ENCODE measurements at regions of chr9 and their contacts with region 1.

Region 1: GRCh38 chr9:116737152-116737546 is 50.0 kb downstream of the TRIM32 start:
- DNase-seq: peak; percentile 47
- H3K4me3 ChIP-seq: no peak overlapping the region
- H3K27ac ChIP-seq: no peak overlapping the region
- H3K27me3 ChIP-seq: peaks cover 2% of the 10 kb centered on the region
- CTCF ChIP-seq: peak; percentile 98

Region 2: GRCh38 chr9:116724123-116724522 is 13.0 kb before region 1 on chr9:
- CTCF ChIA-PET with region 1: interaction called, 69 read pairs
- POLR2A ChIA-PET with region 1: no interaction called
- DNase-seq: no peak
- H3K4me3 ChIP-seq: no peak overlapping the region
- H3K27ac ChIP-seq: no peak overlapping the region
- H3K27me3 ChIP-seq: peaks cover 2% of the 10 kb centered on the region
- CTCF ChIP-seq: no peak

Region 3: GRCh38 chr9:116749176-116749575 is 12.0 kb after region 1 on chr9:
- CTCF ChIA-PET with region 1: interaction called, 18 read pairs
- POLR2A ChIA-PET with region 1: no interaction called
- DNase-seq: no peak
- H3K4me3 ChIP-seq: no peak overlapping the region
- H3K27ac ChIP-seq: no peak overlapping the region
- H3K27me3 ChIP-seq: peaks cover 3% of the 10 kb centered on the region
- CTCF ChIP-seq: no peak

Region 4: DNA sequence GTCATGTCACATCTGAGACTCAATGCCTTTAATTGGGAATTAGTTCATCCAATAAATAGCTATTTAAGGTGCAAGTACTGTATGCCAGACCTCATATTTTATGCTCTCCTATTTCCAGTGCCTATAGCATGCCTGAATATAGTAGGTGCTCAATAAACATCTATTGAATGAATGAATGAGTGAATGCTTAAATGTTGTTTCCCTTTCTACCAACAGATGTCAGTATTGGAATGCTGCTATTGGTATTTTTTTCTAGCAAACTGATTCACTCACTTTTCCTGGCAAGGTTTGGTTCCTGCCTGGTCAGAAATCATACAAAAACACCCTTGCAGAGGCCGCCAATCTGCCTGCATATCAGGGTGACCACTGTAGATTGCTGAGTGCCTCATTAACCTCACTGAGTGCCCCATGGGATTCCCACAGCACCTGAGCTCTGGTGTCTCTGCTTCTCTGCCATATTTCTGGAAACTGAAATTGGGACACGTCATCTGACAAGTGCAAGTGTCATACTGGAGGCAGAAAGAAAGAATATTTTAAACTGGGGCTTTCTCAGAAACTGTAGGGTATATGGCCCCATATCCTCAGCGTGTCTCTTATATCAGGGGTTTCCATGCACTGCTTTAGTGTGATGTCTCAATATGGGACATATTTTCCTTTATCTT is 309.6 kb after region 1 on chr9:
- CTCF ChIA-PET with region 1: no interaction called
- POLR2A ChIA-PET with region 1: no interaction called
- DNase-seq: no peak
- H3K4me3 ChIP-seq: no peak overlapping the region
- H3K27ac ChIP-seq: no peak overlapping the region
- H3K27me3 ChIP-seq: no peaks in the 10 kb centered on the region
- CTCF ChIP-seq: 0 out of 2 replicates have a peak, but pooled peaks have one; percentile 13

Measured in AG04450 (cell line).